Left colon (tissue), 2 donors: ENCODE measurements at regions of chr20 and their contacts with region 1.

Region 1: DNA sequence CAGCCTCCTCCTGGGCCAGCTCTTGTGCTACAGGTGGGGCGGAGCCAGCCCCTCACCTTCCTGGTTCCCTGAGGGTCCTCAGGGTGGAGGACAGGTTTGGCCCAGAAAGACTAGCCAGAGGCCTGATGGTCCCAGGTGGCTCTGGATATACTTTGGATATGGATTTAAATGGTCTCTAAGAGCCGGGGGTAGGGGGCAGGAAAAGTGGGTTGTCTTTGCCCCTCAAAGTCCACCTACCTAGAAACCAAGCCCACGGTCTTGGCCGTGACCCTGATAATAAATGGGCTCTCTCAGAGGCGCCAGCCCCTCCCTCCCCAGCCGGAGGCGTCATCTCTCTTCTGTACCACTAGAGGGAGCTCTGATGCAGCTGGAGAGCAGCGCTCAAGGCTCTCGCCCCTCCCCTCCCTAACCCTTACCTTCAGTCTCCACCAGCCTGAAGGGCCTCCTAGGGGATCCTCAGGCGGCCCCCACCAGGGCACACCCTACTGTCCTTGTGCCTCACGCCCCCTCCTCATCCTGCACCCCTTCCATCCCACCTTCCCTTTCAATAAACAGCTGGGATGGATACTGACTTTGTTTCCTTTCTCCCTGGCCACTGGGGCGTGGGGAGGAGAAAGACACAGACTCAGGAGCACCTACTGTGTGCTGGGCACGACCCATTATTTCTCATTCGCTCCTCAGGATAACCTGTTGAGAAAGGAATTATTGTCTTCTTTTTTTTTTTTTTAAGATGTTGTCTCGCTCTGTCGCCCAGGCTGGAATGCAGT is 7.6 kb downstream of the NRSN2 start:
- DNase-seq: peak; percentile 54 to 76
- ATAC-seq: peak; percentile 93

Region 2: DNA sequence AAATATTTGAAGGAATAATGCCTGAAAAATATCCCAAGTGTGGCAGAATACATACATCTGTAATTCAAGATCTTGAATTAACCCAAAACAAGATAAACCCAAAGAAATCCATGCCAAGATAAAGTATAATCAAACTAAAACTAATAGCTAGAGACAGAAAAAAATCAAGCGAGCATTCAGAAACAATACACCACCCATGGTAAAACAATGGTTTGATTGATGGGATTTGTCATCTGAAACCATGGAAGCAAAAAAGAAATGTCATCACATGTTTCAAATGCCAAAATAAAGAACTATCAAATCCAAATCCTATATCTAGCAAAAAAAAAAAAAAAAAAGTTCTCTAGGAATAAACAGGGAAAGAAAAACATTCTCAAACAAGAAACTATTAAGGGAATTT is 202.3 kb before region 1 on chr20:
- intact Hi-C with region 1: no loop called
- DNase-seq: no peak
- ATAC-seq: no peak

Region 3: DNA sequence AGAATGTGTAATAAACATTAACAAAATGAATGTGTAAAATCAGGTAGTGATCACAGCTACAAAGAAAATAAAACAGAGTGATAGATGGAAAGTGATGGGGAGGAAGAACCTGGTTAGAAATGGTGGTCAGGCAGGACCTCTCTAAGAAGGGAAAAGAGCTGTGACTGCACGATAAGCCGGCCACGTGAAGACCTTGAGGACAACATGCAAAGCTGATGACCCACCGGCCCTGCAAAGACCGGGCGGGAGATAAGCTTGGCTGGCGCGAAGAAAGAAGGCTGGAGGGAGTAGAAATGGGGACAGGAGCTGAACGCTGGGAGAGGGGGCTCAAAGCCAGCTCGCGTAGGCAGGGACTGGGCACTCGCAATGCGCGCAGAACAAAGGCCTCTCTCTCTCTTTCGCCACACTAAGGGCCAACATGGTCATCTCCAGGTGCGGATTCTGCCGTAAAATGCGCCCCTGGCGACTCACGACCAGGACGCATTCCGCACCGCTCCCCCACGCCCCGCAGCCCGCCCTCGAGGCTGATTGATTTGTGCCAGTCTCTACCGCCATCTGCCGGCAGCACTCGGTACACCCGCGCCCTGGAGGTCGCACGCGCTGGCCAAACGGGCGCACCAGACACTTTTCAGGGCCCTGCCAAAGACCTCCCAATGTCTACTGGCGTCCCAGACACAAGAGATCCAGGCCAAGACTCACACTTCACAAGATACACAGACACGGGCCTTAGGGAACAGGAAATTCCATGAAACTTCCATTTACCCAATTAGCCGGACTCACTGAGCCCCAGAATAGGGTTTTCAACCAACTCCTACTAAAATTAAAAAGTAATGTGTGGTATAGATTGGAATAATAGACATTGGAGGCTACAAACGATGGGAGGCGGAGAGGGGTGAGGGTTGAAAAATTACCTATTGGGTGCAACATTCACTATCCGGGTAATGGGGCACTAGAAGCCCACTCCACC is 87.6 kb before region 1 on chr20:
- intact Hi-C with region 1: no loop called
- DNase-seq: peak; percentile 79 to 91
- ATAC-seq: peak; percentile 94

Region 4: GRCh38 chr20:438571-439469 is 84.3 kb after region 1 on chr20:
- intact Hi-C with region 1: no loop called
- DNase-seq: peak in 1 of 2 donors; percentile 47
- ATAC-seq: no peak

Region 5: DNA sequence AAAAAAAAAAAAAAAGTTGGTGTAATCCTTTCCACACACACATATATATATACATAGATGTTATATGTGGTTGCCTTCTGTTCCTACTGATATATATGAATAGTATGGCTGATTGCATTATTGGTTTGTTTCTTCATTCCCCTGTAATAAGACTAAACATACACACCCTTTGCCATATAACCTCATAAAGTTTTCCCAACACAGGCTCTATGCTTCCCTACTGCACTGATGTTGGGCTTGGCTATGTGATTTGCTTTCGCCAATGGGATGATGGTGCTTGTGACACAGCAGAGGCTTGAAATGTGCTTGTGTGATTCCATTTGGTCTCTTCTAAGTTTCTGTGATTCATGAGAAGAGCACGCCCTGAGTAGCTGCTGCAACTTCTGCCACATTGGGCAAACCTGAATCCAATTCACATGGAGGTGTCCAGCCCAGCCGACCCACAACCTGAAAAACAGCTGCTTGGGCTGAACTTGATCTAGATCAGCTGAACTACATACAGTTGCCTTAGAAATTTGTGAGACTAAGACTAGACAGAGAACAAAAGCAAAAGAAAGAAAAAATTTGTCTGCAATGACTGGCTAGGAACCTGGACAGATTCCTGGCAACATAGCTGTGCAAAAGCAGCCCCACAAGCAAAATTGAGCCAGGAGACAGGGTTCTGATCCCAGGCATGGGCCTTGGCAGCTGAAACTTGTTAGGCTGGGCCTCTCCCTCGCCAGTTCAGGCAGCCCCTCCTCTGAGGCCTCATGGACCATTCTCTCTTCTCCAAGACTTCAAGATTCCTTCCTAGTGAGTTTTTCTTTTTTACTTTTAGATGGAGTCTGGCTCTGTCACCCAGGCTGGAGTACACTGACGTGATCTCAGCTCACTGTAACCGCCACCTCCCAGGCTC is 121.2 kb after region 1 on chr20:
- intact Hi-C with region 1: loop called (anchors 2 to 10 kb)
- DNase-seq: no peak
- ATAC-seq: peak; percentile 85

Region 6: GRCh38 chr20:483813-484644 is 129.5 kb after region 1 on chr20:
- intact Hi-C with region 1: loop called in 1 of 2 experiments (anchors 10 kb)
- DNase-seq: no peak
- ATAC-seq: no peak

Region 7: GRCh38 chr20:645318-646106 is 291.0 kb after region 1 on chr20:
- intact Hi-C with region 1: loop called in 1 of 2 experiments (anchors 10 kb)
- DNase-seq: peak in 1 of 2 donors; percentile 68
- ATAC-seq: peak; percentile 91

Region 8: DNA sequence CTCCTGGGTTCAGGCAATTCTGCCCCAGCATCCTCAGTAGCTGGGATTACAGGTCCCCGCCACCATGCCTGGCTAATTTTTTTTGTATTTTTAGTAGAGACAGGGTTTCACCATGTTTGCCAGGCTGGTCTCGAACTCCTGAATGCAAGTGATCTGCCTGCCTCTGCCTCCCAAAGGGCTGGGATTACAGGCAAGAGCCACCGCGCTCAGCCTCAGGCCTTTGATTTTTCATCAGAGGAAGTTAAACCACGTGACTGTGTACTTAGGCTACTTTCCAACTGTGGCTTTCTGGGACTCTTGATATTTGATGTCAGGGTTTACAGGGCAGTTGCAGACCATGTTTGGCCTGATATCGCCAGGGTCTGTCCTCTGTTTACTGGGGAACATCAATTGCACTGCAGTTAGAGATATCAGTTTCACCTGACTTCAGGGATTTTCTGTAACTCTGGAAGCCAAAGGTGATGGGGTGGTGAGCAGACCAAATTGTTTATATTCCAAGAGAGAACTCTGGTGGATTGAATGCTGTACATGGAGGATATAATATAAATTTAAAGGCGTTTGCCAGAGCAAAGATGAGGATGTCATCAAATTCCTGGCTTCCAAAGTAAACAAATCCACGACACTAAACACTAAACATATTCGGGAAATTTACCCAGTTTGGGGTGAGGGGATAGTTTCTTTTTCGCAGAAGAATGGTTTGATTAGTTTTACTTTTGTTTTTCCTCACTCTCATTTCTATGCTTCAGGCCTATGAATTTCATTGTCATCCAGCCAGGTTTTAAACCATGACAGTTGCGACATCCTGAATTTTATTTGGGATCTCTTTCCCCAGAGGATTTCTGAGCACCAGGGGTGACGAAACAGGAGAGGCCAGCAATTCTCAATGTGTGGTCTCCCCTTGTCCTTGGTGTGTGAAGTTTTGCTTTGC is 768.2 kb after region 1 on chr20:
- intact Hi-C with region 1: no loop called
- DNase-seq: peak; percentile 49 to 52
- ATAC-seq: peak; percentile 36